Left cardiac atrium (tissue), 4 donors: ENCODE measurements at regions of chr15 and their contacts with region 1.

Region 1: GRCh38 chr15:25693321-25694237 is 169.5 kb downstream of the ATP10A start:
- DNase-seq: no peak
- ATAC-seq: peak; percentile 39 to 51

Region 2: DNA sequence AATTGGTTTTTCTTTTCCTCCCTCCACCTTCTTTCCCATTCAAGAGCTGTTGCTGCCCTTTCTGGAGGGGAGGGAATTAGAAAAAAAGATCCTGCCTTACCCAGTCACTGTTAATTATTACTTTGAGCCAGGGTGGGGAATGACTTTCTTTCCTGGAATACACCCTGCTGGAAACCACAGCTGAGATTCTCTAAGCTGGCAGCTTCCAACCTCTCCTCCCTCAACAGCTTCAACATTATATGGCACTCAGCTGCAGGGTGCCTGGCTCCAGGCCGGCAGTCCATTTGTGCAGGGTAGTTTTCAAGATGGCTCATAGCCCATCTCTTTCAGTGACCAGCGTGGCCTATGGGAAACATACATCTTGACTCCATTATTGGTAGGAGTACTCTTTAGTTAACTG is 360.5 kb before region 1 on chr15:
- intact Hi-C with region 1: no loop called
- DNase-seq: no peak
- ATAC-seq: no peak

Region 3: DNA sequence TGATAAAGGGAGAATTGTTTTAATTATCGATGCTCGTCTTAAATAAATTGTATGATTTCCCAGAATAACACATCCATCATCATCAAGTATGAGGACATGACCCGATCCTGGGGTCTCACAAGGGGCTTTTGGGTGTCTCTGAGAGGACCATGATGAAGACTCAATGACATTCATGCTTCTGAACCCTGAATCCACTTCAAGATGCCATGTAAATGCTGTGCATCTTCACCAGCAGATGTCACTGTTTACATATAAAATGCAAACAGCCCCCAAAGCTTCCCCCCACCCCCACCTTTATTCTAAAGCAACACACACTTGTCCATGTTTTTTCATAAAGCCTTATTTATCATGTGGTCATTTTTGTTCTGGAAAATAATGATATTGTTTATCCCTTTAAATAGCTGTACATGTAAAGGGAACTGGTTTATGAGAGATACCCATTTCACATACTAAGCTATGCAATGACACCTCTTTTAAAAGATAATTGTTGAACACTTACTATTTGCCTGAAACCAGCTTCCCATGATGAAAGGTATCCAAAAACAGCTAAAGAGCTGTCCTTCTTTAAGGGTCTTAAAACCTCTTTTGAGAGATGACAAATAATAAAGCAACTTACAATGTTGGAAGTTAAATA is 185.1 kb before region 1 on chr15:
- intact Hi-C with region 1: loop called in 1 of 2 experiments (anchors 10 kb)
- DNase-seq: no peak
- ATAC-seq: peak in 1 of 2 donors; percentile 45

Region 4: GRCh38 chr15:25912035-25912434 is 218.5 kb after region 1 on chr15:
- intact Hi-C with region 1: no loop called
- DNase-seq: no peak
- ATAC-seq: no peak